ENCODE measurements at regions of chr12 and their contacts with region 1.

Region 1: DNA sequence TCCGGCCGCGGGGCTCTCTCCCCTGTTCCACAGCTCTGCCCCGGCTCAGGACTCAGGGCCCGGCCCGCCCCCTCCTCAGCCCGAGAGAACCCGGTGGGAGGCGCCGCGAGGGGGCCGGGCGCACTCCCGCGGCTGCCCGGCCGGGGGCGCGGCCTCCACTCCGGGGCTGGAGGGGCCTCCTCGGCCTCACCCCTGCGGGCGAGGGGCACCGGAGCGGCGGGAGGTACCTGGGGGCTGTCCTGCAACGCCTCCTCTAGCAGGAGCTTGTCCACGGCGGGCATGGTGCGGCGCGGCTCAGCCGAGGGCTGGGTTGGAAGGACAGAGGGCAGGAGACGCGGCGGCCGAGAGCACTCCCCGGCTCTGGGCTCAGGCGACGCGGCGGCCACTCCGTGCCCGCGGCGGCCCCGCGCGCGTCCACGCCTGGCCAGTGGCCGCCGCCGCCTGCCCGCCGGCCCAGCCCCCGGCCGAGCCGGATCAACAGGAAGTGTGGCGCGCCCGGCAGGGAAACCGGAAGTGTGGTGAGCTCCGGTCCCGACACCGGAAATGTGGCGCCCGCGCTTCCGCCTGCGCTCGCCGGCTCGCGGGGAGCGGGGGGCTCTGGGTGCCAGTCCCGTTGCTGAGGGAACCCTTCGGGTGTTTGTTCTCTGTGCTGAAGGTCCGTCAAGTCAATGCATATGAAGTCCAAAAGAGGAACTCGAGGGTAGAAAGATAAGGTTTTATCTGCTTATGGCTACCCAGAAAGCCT is at the start of gene APPL2:
- DNase-seq: peak; percentile 86
- H3K4me3 Mint-ChIP-seq: peak within 1 kb of the TSS; percentile 87
- H3K27ac Mint-ChIP-seq: peak within 1 kb of the TSS; percentile 90
- H3K4me1 Mint-ChIP-seq: peaks cover 24% of the 10 kb centered on the region
- H3K27me3 Mint-ChIP-seq: no peaks in the 10 kb centered on the region
- CTCF ChIP-seq: peak; percentile 25
- total RNA-seq, gene APPL2: 32.5 and 35.5 TPM in 2 replicates

Region 2: GRCh38 chr12:105253882-105254513 is 18.1 kb after region 1 on chr12:
- CTCF ChIA-PET with region 1: no interaction called
- POLR2A ChIA-PET with region 1: interaction called, 42 read pairs
- intact Hi-C with region 1: no loop called
- DNase-seq: peak; percentile 75
- H3K4me3 Mint-ChIP-seq: peak overlapping the region; percentile 9
- H3K27ac Mint-ChIP-seq: peak overlapping the region; percentile 72
- H3K4me1 Mint-ChIP-seq: peaks cover 51% of the 10 kb centered on the region
- H3K27me3 Mint-ChIP-seq: no peaks in the 10 kb centered on the region
- CTCF ChIP-seq: no peak

Region 3: GRCh38 chr12:105330283-105330930 is 94.5 kb after region 1 on chr12 and contains the start of gene C12orf75:
- CTCF ChIA-PET with region 1: interaction called, 3 read pairs
- POLR2A ChIA-PET with region 1: interaction called, 51 read pairs
- intact Hi-C with region 1: loop called (anchors 2 kb)
- DNase-seq: peak; percentile 59
- H3K4me3 Mint-ChIP-seq: peak within 1 kb of the TSS; percentile 71
- H3K27ac Mint-ChIP-seq: no peak within 1 kb of the TSS
- H3K4me1 Mint-ChIP-seq: peaks cover 28% of the 10 kb centered on the region
- H3K27me3 Mint-ChIP-seq: no peaks in the 10 kb centered on the region
- CTCF ChIP-seq: no peak
- total RNA-seq, gene C12orf75: 53.6 and 67.7 TPM in 2 replicates